ENCODE measurements at regions of chr1 and their contacts with region 1.

Region 1: GRCh38 chr1:6475381-6476133 is 9.6 kb upstream of the TNFRSF25 start:
- DNase-seq: peak; percentile 70
- H3K4me3 Mint-ChIP-seq: no peak overlapping the region
- H3K27ac Mint-ChIP-seq: no peak overlapping the region
- H3K4me1 Mint-ChIP-seq: no peaks in the 10 kb centered on the region
- H3K27me3 Mint-ChIP-seq: no peaks in the 10 kb centered on the region

Region 2: GRCh38 chr1:6445062-6445763 is 30.3 kb before region 1 on chr1:
- intact Hi-C with region 1: loop called (anchors 2 kb)
- DNase-seq: no peak
- H3K4me3 Mint-ChIP-seq: no peak overlapping the region
- H3K27ac Mint-ChIP-seq: no peak overlapping the region
- H3K4me1 Mint-ChIP-seq: peaks cover 15% of the 10 kb centered on the region
- H3K27me3 Mint-ChIP-seq: peaks cover 50% of the 10 kb centered on the region